ENCODE measurements at regions of chr15 and their contacts with region 1.

Region 1: GRCh38 chr15:75201609-75202250 is at the start of gene C15orf39:
- DNase-seq: peak; percentile 94
- H3K4me3 ChIP-seq: peak within 1 kb of the TSS; percentile 76 to 89 (median 87)
- H3K27ac ChIP-seq: peak within 1 kb of the TSS; percentile 89 to 92 (median 91)
- H3K4me1 ChIP-seq: peaks cover 50 to 63% (median 55%) of the 10 kb centered on the region in 4 donors
- H3K27me3 ChIP-seq: no peaks in the 10 kb centered on the region
- CTCF ChIP-seq: peak; percentile 86 to 97 (median 93)
- EP300 ChIP-seq: no peak
- POLR2A ChIP-seq: peak; percentile 93
- total RNA-seq, gene C15orf39: 7.5 to 17.7 (median 13.4) TPM

Region 2: DNA sequence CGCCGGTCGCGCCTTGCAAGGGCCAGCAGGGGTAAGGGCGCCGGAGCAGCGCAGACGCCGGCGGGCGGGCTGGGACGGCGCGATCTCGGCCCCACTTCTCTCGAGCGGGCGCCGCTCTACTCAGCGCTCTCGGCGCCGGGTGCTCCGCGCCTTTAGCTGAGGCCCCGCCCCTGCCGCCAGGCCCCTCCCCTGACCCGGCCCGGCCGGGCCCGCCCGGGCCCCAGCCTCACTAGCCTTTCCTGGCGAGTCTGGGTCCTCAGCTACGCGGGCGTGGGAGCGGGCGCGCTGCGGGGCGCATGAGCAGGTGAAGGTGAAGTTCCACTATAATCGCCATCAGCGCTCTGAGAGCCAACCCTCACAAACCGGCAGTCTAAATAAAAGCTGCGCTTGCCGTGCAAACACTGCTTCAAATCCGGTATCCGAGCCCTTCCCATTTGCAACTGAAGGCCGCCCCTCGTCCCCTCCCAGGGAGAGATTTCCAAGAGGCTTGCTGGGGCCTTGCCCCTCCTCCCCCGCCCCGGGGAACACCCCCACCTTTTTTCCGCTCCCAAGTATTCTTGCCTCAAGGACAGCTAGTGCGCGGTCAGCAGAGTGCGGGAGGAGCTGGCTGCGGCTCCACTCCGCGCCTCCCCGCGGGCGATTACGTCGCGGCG is 245.0 kb before region 1 on chr15 and contains the start of gene RPP25:
- intact Hi-C with region 1: loop called (anchors 10 kb)
- DNase-seq: no peak
- H3K4me3 ChIP-seq: peak within 1 kb of the TSS; percentile 68 to 77 (median 69)
- H3K27ac ChIP-seq: peak within 1 kb of the TSS; percentile 68 to 81 (median 73)
- H3K4me1 ChIP-seq: peaks cover 34 to 58% (median 57%) of the 10 kb centered on the region in 4 donors
- H3K27me3 ChIP-seq: peaks cover 0 to 35% (median 20%) of the 10 kb centered on the region in 4 donors
- CTCF ChIP-seq: no peak
- EP300 ChIP-seq: no peak
- POLR2A ChIP-seq: no peak
- total RNA-seq, gene RPP25: 4.2 to 7.2 (median 7.0) TPM

Region 3: DNA sequence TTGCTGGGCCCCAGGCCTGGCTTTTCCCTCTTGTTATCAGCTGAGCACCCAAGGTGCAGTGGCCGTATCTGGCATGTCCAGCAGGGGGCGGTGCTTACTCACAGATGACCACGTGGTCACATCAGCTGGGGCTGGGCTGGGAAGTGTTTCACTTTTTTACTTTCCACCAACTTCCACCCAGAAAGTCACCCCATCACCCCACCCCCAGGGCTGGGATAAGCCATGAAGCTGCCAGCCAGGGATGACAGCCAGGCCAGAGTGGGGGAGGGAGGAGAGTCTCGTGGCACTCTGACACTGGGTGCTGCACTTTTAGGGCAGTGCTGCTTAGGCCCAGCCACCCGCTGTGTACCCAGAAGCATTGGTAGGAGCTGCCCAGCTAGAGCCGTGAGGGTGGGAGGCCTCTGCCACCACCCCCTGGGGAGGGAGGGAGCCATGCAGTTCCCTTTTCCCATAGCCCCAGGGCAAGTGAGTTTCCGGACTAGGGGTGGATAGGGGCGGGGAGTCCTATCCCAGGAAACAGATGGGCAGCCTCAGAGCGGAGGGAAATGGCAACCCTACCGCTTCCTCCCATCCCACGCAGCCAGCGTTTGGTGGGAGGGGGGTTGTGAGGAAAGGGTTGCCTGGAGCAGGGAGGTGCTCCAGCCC is 172.2 kb before region 1 on chr15:
- intact Hi-C with region 1: loop called (anchors 1 kb)
- DNase-seq: peak; percentile 99
- H3K4me3 ChIP-seq: peak overlapping the region; percentile 27 to 51 (median 32)
- H3K27ac ChIP-seq: peak overlapping the region; percentile 65 to 77 (median 66)
- H3K4me1 ChIP-seq: peaks cover 34 to 51% (median 46%) of the 10 kb centered on the region in 4 donors
- H3K27me3 ChIP-seq: no peaks in the 10 kb centered on the region
- CTCF ChIP-seq: peak; percentile 92 to 96 (median 94)
- EP300 ChIP-seq: no peak
- POLR2A ChIP-seq: no peak

Region 4: GRCh38 chr15:75042730-75043508 is 158.8 kb before region 1 on chr15:
- intact Hi-C with region 1: loop called (anchors 5 kb)
- DNase-seq: peak; percentile 93
- H3K4me3 ChIP-seq: no peak overlapping the region
- H3K27ac ChIP-seq: peak overlapping the region; percentile 72 to 80 (median 76)
- H3K4me1 ChIP-seq: peaks cover 58 to 60% (median 59%) of the 10 kb centered on the region in 4 donors
- H3K27me3 ChIP-seq: no peaks in the 10 kb centered on the region
- CTCF ChIP-seq: peak; percentile 22 to 39 (median 28)
- EP300 ChIP-seq: no peak
- POLR2A ChIP-seq: no peak

Region 5: GRCh38 chr15:75453703-75454470 is 252.2 kb after region 1 on chr15:
- intact Hi-C with region 1: no loop called
- DNase-seq: peak; percentile 99
- H3K4me3 ChIP-seq: peak overlapping the region; percentile 88 to 95 (median 92)
- H3K27ac ChIP-seq: peak overlapping the region; percentile 97 to 100 (median 100)
- H3K4me1 ChIP-seq: peaks cover 24 to 36% (median 31%) of the 10 kb centered on the region in 4 donors
- H3K27me3 ChIP-seq: no peaks in the 10 kb centered on the region
- CTCF ChIP-seq: no peak
- EP300 ChIP-seq: no peak
- POLR2A ChIP-seq: peak; percentile 50

Measured in esophagus muscularis mucosa (tissue), 4 donors.